BJ (cell line): ENCODE measurements at regions of chr1 and their contacts with region 1.

Region 1: GRCh38 chr1:66242646-66243547 is 291.1 kb upstream of the SGIP1 start:
- DNase-seq: no peak
- H3K4me3 ChIP-seq: no peak overlapping the region
- H3K27me3 ChIP-seq: no peaks in the 10 kb centered on the region
- CTCF ChIP-seq: peak; percentile 99

Region 2: GRCh38 chr1:65948609-65949229 is 294.2 kb before region 1 on chr1:
- CTCF ChIA-PET with region 1: interaction called, 13 read pairs
- POLR2A ChIA-PET with region 1: no interaction called
- DNase-seq: no peak
- H3K4me3 ChIP-seq: no peak overlapping the region
- H3K27me3 ChIP-seq: no peaks in the 10 kb centered on the region
- CTCF ChIP-seq: peak; percentile 38

Region 3: DNA sequence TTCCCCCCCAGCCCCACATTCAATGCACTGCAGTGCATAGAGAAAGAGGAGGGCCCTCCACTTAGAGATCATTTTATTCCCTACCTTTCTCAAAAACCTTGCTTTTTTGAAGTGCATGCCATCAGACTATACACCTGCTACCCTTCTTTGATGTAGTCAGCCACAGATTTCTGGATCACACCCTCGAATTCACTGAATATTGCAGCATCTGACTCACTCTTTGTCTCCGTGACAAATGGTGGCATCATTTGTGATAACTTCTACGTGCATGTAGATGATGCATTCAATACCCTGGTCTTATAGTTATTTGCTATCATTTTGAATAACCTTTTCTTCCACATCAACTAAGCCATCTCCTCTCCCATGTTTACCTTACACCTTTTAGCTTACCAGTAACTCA is 19.2 kb before region 1 on chr1:
- CTCF ChIA-PET with region 1: interaction called, 15 read pairs
- POLR2A ChIA-PET with region 1: no interaction called
- DNase-seq: no peak
- H3K4me3 ChIP-seq: no peak overlapping the region
- H3K27me3 ChIP-seq: no peaks in the 10 kb centered on the region
- CTCF ChIP-seq: no peak

Region 4: GRCh38 chr1:66253330-66253921 is 10.5 kb after region 1 on chr1:
- CTCF ChIA-PET with region 1: interaction called, 15 read pairs
- POLR2A ChIA-PET with region 1: no interaction called
- DNase-seq: no peak
- H3K4me3 ChIP-seq: no peak overlapping the region
- H3K27me3 ChIP-seq: no peaks in the 10 kb centered on the region
- CTCF ChIP-seq: peak; percentile 72

Region 5: DNA sequence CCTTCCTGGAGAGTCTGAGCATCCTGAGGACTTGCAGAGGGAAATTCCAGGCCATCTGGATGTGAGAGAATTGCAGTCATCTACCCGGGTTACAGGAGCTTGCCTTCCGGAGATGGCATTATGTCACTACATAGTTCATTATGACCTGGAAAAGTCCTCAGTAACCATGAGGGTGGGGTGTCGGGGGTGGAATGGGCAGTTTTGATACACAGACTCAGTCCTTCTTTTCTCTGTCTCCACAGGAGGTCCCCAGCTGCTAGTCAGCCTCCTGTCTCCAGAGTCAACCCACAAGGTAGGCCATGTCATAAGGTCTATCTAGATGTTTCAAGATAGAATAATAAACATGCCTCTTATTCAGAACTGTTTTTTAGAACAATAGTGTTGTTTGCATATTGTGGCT is 22.9 kb after region 1 on chr1:
- CTCF ChIA-PET with region 1: no interaction called
- POLR2A ChIA-PET with region 1: no interaction called
- DNase-seq: no peak
- H3K4me3 ChIP-seq: no peak overlapping the region
- H3K27me3 ChIP-seq: no peaks in the 10 kb centered on the region
- CTCF ChIP-seq: no peak